Keratinocyte (primary cell): ENCODE measurements at regions of chr6 and their contacts with region 1.

Region 1: GRCh38 chr6:56259234-56260077 is 12.1 kb upstream of the COL21A1 start:
- DNase-seq: no peak
- H3K4me3 ChIP-seq: no peak overlapping the region
- H3K27ac ChIP-seq: no peak overlapping the region
- H3K4me1 ChIP-seq: no peaks in the 10 kb centered on the region
- H3K27me3 ChIP-seq: no peaks in the 10 kb centered on the region
- CTCF ChIP-seq: no peak

Region 2: DNA sequence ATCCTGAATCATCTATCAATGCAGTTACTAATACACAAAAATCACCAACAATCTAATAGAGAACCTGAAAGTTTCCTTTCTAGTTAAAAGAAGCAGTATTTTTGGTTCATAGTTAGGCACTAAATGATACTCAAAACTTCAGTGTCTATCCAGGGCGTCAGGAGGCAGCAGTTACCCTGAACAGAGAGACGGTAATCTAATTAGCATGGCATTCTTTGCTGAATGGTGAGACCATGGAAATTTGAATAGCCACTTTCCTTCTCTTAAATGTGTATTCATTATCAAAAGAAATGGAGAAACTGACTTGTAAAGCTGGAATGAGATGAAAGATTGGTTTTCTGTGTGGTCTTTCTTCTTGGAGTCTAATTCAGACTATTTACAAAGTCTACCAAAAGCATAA is 237.5 kb before region 1 on chr6:
- dilution Hi-C with region 1: loop called (anchors 25 kb)
- DNase-seq: no peak
- H3K4me3 ChIP-seq: no peak overlapping the region
- H3K27ac ChIP-seq: no peak overlapping the region
- H3K4me1 ChIP-seq: no peaks in the 10 kb centered on the region
- H3K27me3 ChIP-seq: no peaks in the 10 kb centered on the region
- CTCF ChIP-seq: peak in 2 of 3 experiments; percentile 23 to 45

Region 3: GRCh38 chr6:56162081-56162480 is 97.4 kb before region 1 on chr6:
- dilution Hi-C with region 1: no loop called
- DNase-seq: no peak
- H3K4me3 ChIP-seq: no peak overlapping the region
- H3K27ac ChIP-seq: no peak overlapping the region
- H3K4me1 ChIP-seq: no peaks in the 10 kb centered on the region
- H3K27me3 ChIP-seq: no peaks in the 10 kb centered on the region
- CTCF ChIP-seq: no peak